Dendritic cell treated with granulocyte-macrophage colony-stimulating factor and Interleukin-4, amounts not matched to agents 40 ng/mL and 50 ng/mL, for 4 days (primary cell): ENCODE measurements at regions of chr4 and their contacts with region 1.

Region 1: GRCh38 chr4:76148142-76148865 is at the start of gene NUP54:
- H3K4me3 Mint-ChIP-seq: peak within 1 kb of the TSS; percentile 97
- H3K27ac Mint-ChIP-seq: peak within 1 kb of the TSS; percentile 91
- H3K4me1 Mint-ChIP-seq: peaks cover 6% of the 10 kb centered on the region
- H3K27me3 Mint-ChIP-seq: no peaks in the 10 kb centered on the region

Region 2: GRCh38 chr4:75989846-75990528 is 158.3 kb before region 1 on chr4:
- intact Hi-C with region 1: loop called (anchors 2 kb)
- H3K4me3 Mint-ChIP-seq: peak overlapping the region; percentile 87
- H3K27ac Mint-ChIP-seq: peak overlapping the region; percentile 89
- H3K4me1 Mint-ChIP-seq: peaks cover 29% of the 10 kb centered on the region
- H3K27me3 Mint-ChIP-seq: peaks cover 6% of the 10 kb centered on the region

Region 3: GRCh38 chr4:76326515-76326914 is 178.2 kb after region 1 on chr4:
- intact Hi-C with region 1: no loop called
- H3K4me3 Mint-ChIP-seq: no peak overlapping the region
- H3K27ac Mint-ChIP-seq: no peak overlapping the region
- H3K4me1 Mint-ChIP-seq: no peaks in the 10 kb centered on the region
- H3K27me3 Mint-ChIP-seq: no peaks in the 10 kb centered on the region